ENCODE measurements at regions of chr12 and their contacts with region 1.

Region 1: GRCh38 chr12:46303039-46303666 is 34.3 kb upstream of the SLC38A1 start:
- DNase-seq: no peak
- H3K4me3 Mint-ChIP-seq: no peak overlapping the region
- H3K27ac Mint-ChIP-seq: no peak overlapping the region
- H3K4me1 Mint-ChIP-seq: no peaks in the 10 kb centered on the region
- H3K27me3 Mint-ChIP-seq: peaks cover 14% of the 10 kb centered on the region

Region 2: GRCh38 chr12:46071769-46072624 is 231.2 kb before region 1 on chr12:
- intact Hi-C with region 1: loop called (anchors 1 kb)
- DNase-seq: peak; percentile 42
- H3K4me3 Mint-ChIP-seq: no peak overlapping the region
- H3K27ac Mint-ChIP-seq: no peak overlapping the region
- H3K4me1 Mint-ChIP-seq: peaks cover 11% of the 10 kb centered on the region
- H3K27me3 Mint-ChIP-seq: no peaks in the 10 kb centered on the region

Region 3: GRCh38 chr12:46153268-46153872 is 149.8 kb before region 1 on chr12:
- intact Hi-C with region 1: loop called (anchors 1 kb)
- DNase-seq: no peak
- H3K4me3 Mint-ChIP-seq: no peak overlapping the region
- H3K27ac Mint-ChIP-seq: no peak overlapping the region
- H3K4me1 Mint-ChIP-seq: no peaks in the 10 kb centered on the region
- H3K27me3 Mint-ChIP-seq: peaks cover 6% of the 10 kb centered on the region

Region 4: DNA sequence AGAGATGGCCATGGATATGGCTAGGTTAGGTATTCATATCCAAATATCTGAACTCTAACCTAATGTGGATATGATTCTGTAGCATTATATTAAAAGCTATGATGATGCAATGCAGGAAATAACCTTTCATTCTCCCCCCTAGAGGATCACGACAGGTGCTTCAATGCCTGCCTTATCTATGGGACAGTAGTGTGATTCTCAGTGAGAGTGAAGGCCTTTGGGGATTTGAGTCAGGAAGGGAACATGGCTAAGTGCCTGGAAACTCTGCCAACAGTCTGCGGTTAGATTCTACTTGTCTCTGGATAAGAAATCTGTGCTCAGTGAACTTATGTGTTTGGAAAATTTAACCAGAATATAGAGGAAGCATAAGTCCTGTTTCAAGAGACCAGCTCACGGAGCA is 116.1 kb before region 1 on chr12:
- intact Hi-C with region 1: no loop called
- DNase-seq: no peak
- H3K4me3 Mint-ChIP-seq: no peak overlapping the region
- H3K27ac Mint-ChIP-seq: peak overlapping the region; percentile 52
- H3K4me1 Mint-ChIP-seq: peaks cover 13% of the 10 kb centered on the region
- H3K27me3 Mint-ChIP-seq: no peaks in the 10 kb centered on the region

Measured in activated T-helper 1 cell treated with anti-CD3 and anti-CD28 coated beads, Interleukin-12 subunit alpha, Interleukin-12 subunit beta, Interleukin-2, Interleukin-4 antibody, amounts not matched to agents 30 ng/mL and 10 ng/mL and 1 ng/mL, durations not matched to agents 14 hours and 24 hours and 36 hours (primary cell).